ENCODE measurements at regions of chr11 and their contacts with region 1.

Region 1: GRCh38 chr11:12149672-12150225 is 39.4 kb downstream of the MICAL2 start:
- DNase-seq: peak; percentile 58 to 91 (median 74)
- ATAC-seq: peak; percentile 82
- H3K4me3 ChIP-seq: peak overlapping the region; percentile 11; the same call in 1 of the 2 replicates
- H3K27ac ChIP-seq: peak overlapping the region; percentile 97
- H3K4me1 ChIP-seq: peaks cover 32 to 51% of the 10 kb centered on the region in 2 experiments
- H3K27me3 ChIP-seq: no peaks in the 10 kb centered on the region
- CTCF ChIP-seq: no peak
- EP300 ChIP-seq: peak; percentile 91
- POLR2A ChIP-seq: 0 out of 2 replicates have a peak, but pooled peaks have one; percentile 25
- RAD21 ChIP-seq: peak in 1 of 2 experiments; percentile 20; a peak in 3 of 4 replicates

Region 2: DNA sequence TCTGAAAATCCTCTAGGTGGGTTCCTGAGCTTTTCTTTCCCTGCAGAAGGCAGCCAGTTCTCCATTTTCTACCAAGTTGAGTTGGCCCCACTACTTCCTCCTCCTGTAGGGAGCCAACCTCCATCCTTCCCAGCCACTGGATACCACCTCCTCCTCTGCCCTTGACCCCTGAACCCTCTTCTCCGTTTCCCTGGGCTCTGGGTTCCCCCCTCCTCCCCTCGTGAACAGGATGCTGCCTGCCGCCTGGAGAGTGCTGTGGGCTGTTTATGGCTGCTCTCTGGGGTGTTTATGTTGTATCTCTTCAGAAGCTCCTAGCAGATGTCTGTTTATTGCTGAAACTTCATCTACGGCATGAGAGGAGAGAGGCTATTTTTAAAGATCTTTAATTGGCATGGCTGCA is 30.8 kb before region 1 on chr11:
- CTCF ChIA-PET with region 1: no interaction called
- POLR2A ChIA-PET with region 1: no interaction called
- in situ Hi-C with region 1: no loop called
- intact Hi-C with region 1: loop called (anchors 5 kb)
- DNase-seq: no peak
- ATAC-seq: no peak
- H3K4me3 ChIP-seq: no peak overlapping the region
- H3K27ac ChIP-seq: no peak overlapping the region
- H3K4me1 ChIP-seq: peaks cover 65 to 76% of the 10 kb centered on the region in 2 experiments
- H3K27me3 ChIP-seq: no peaks in the 10 kb centered on the region
- CTCF ChIP-seq: peak; percentile 11 to 29 (median 23); a peak in 2 of 6 replicates
- EP300 ChIP-seq: no peak
- POLR2A ChIP-seq: no peak
- RAD21 ChIP-seq: no peak

Measured in K562 (cell line).